Ovary (tissue), 10 donors: ENCODE measurements at regions of chr10 and their contacts with region 1.

Region 1: DNA sequence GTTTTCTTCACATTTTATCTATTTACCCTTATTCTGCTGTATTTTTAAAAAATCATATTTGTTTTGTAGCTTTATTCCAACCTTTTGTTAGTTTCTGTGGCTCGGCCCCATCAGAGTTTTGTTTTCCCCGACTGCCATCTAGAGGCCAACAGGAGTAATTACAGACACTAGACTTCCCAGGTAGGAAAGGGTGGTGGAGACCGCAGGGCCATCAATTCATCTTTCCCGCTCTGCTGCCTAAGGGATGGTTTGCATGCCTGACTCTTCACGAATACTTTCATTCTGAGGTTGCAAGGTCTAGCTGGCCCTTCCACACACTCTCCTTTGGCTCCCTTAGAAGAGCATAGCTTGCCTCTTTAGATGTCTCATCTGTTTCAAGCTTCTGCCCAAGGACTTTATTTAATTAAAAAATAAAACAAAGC is 38.3 kb downstream of the LYZL2 start:
- DNase-seq: peak in 2 of 5 donors; percentile 24 to 41
- H3K4me3 ChIP-seq: no peak overlapping the region
- H3K27ac ChIP-seq: no peak overlapping the region
- H3K4me1 ChIP-seq: no peaks in the 10 kb centered on the region
- H3K27me3 ChIP-seq: no peaks in the 10 kb centered on the region
- CTCF ChIP-seq: peak; percentile 60 to 90 (median 78)
- EP300 ChIP-seq: no peak
- POLR2A ChIP-seq: no peak

Region 2: DNA sequence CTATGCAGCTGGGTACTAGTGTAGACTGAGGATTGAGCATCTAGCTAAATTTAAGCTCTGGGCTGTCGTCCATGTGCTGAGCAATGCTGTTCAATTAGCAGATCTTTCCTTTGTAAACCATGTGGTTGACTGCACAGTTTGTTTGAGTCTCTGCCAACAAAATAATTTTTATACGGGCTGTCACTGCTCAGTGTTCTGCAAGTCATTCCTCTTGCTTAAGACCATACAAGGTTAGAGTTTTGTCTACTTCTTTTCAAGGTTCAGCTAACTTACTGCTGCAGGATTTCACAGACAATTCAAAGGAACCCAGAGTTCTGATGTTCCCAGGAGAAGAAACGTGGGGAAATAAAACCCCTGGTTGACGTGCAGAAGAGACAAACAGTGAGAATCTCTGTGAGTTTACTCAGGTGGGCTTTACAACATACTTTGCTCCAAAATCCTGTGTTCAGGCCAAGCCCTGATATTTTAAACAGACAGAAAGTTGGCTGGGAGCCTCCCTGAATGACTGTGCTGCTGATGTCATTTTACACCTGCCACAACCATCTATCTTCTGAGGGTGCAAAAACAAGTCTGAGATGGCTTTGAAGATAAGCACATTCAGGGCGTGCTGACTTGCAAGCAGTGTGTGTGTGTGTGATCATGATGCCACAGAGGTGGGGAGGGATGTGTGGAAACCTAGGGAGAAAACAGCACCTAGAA is 779.4 kb before region 1 on chr10:
- intact Hi-C with region 1: no loop called
- DNase-seq: peak in 4 of 5 donors; percentile 37 to 70 (median 58)
- H3K4me3 ChIP-seq: no peak overlapping the region
- H3K27ac ChIP-seq: peak overlapping the region in 1 of 2 donors; percentile 16
- H3K4me1 ChIP-seq: peaks cover 3% of the 10 kb centered on the region
- H3K27me3 ChIP-seq: no peaks in the 10 kb centered on the region
- CTCF ChIP-seq: no peak
- EP300 ChIP-seq: peak; percentile 43
- POLR2A ChIP-seq: no peak

Region 3: DNA sequence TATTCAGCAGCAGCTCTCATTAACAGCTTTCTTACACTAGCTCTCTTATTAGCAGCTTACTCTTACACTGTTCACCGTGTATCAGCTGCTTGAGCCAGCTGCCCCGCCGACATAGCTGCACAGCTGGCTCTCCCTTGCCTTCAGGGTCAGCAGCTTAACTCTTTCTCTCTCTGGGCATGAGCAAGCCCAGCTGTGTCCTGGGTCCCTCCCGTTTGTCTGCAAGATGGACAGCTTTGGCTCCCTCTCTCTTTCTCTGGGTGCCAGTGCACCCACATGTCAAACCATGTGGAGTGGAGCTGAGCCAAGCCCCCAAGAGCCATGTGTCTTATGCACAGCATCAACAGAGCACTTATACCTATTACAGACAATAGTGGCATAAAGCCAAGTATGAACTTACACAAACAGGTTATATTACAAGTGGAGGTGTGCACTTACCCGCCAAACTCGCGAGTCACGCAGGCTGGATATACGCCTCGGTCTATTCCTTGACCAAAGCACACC is 206.5 kb before region 1 on chr10:
- intact Hi-C with region 1: loop called in 2 of 4 experiments (anchors 5 kb)
- DNase-seq: no peak
- H3K4me3 ChIP-seq: no peak overlapping the region
- H3K27ac ChIP-seq: no peak overlapping the region
- H3K4me1 ChIP-seq: peaks cover 6% of the 10 kb centered on the region
- H3K27me3 ChIP-seq: no peaks in the 10 kb centered on the region
- CTCF ChIP-seq: no peak
- EP300 ChIP-seq: no peak
- POLR2A ChIP-seq: no peak

Region 4: GRCh38 chr10:30392564-30392990 is 198.7 kb before region 1 on chr10:
- intact Hi-C with region 1: loop called (anchors 5 kb)
- DNase-seq: peak; percentile 61 to 80 (median 77)
- H3K4me3 ChIP-seq: no peak overlapping the region
- H3K27ac ChIP-seq: no peak overlapping the region
- H3K4me1 ChIP-seq: peaks cover 7% of the 10 kb centered on the region
- H3K27me3 ChIP-seq: no peaks in the 10 kb centered on the region
- CTCF ChIP-seq: peak; percentile 75 to 83 (median 76)
- EP300 ChIP-seq: no peak
- POLR2A ChIP-seq: no peak